H1 (cell line): ENCODE measurements at regions of chr10 and their contacts with region 1.

Region 1: DNA sequence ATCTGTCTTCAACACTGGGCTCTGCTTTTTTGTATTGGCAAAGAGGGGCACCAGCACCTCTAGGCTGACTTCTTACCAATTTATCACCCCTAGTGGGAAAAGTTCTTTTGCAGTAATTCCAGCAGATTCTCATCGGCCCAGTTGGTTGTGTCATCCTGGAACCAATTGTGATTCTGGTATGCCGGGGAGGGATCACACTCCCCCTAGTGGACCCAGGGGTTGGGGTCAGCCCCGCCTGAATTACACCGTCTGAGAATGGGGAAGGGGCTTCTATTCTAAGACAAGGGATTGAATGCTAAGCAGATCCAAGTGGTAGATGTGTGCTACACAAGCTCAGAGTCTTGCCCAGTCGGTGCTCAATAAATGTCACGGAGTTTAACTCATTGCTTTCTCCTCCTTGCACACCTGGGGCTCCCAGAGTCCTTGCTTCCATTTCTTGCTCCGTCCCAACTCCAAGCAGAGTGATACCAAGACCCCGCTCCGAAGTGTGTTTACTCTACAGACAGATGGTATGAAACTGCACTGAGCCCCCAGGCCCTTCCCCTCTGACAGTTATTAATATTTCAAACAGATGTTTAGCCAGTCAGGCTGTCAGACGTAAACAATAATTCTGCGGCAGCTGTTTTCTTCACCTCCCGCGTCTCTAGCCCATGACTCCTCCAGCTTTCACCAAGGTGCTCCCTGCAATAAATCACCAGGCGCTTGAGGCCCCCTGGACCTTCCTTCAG is 71.9 kb downstream of the C10orf105 start:
- DNase-seq: peak in 1 of 2 experiments; percentile 78
- H3K4me3 ChIP-seq: no peak overlapping the region
- H3K27ac ChIP-seq: no peak overlapping the region
- H3K4me1 ChIP-seq: peaks cover 10 to 14% (median 10%) of the 10 kb centered on the region in 4 experiments
- H3K27me3 ChIP-seq: no peaks in the 10 kb centered on the region
- CTCF ChIP-seq: peak; percentile 73 to 84 (median 83)
- EP300 ChIP-seq: no peak
- POLR2A ChIP-seq: no peak
- RAD21 ChIP-seq: peak; percentile 46 to 74

Region 2: DNA sequence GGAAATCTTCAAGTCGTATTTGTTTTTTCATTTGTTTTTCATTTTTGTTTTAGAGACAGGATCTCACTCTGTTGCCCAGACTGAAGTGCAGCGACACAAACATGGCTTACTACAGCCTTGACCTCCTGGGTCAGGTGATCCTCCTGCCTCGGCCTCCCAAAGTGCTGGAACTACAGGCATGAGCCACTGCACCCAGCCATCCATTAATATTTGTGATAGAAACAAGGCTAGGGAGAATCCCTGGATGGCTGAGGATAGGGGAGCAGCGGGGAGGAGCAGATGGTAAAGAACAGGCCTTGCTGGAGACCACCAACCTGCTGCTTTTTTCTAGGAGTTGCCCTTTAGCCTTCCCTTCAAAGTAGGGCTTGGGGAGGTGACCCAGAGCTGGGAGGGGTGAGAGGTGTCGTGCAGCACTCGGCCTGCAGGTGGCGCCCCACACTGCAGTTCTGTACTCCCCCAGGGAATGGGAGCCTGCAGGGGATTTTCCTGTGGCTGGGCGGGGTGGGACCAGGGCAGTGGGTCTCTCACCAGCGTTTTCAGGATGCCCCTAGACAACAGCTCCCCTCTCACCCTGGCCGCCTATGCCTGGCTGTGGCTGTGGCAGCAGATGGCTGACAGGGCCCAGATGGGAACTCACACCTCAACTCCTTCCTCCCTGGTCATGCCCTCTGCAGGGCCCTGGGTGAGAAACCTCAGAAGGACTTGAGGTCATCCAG is 263.6 kb before region 1 on chr10:
- CTCF ChIA-PET with region 1: interaction called, 10 read pairs
- POLR2A ChIA-PET with region 1: no interaction called
- DNase-seq: peak; percentile 58 to 99
- H3K4me3 ChIP-seq: no peak overlapping the region
- H3K27ac ChIP-seq: no peak overlapping the region
- H3K4me1 ChIP-seq: no peaks in the 10 kb centered on the region
- H3K27me3 ChIP-seq: no peaks in the 10 kb centered on the region
- CTCF ChIP-seq: peak; percentile 93 to 96 (median 95)
- EP300 ChIP-seq: no peak
- POLR2A ChIP-seq: no peak
- RAD21 ChIP-seq: peak; percentile 91 to 92

Region 3: DNA sequence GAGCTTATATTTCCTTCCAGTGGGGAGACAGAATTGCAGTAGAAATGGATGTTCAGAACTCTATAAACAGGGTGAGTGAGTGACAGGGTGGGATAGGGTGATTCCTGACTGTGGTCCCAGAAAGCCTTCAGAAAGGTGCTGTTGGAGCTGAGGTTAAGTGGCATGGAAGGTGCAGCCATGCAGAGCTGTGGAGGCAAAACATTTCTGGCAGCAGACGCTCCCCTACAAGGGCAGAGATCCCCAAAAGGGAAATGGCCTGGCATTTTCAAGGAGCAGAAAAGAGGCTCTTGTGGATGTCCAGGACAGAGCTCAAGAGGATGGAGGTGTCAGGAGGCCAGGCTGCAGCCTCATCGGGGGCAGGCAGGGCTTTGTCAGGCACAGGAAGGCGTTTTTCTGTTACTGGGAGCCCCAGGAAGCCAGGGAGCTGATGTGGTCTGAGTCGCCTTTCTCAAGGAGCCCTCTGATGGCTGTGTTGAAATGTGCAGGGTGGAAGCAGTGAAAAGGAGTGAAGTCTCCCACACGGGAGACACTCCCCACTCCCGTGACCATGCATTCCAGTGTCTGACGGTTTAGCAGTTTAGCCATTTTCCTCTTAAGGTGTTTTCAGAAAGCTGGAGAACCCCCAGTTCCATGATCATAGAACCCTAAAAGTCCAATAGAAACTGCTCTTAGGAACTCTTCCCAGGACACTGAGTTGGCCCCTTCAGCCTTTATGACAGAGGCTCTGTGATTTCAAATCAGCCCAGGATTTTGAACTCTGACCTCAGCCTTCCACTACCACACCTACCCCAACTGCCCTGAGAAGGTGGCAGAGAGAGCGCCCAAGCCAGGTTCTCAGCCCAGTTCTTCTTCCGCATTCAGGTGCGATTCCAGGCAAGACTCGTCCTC is 24.3 kb before region 1 on chr10:
- CTCF ChIA-PET with region 1: interaction called, 43 read pairs
- POLR2A ChIA-PET with region 1: interaction called, 3 read pairs
- DNase-seq: no peak
- H3K4me3 ChIP-seq: peak overlapping the region in 1 of 4 experiments; percentile 33; a peak in 1 of 8 replicates
- H3K27ac ChIP-seq: no peak overlapping the region
- H3K4me1 ChIP-seq: peaks cover 25 to 52% (median 35%) of the 10 kb centered on the region in 4 experiments
- H3K27me3 ChIP-seq: no peaks in the 10 kb centered on the region
- CTCF ChIP-seq: peak in 2 of 3 experiments; percentile 6 to 46; a peak in 2 of 4 replicates
- EP300 ChIP-seq: no peak
- POLR2A ChIP-seq: no peak
- RAD21 ChIP-seq: peak; percentile 28 to 43; a peak in 3 of 4 replicates

Region 4: DNA sequence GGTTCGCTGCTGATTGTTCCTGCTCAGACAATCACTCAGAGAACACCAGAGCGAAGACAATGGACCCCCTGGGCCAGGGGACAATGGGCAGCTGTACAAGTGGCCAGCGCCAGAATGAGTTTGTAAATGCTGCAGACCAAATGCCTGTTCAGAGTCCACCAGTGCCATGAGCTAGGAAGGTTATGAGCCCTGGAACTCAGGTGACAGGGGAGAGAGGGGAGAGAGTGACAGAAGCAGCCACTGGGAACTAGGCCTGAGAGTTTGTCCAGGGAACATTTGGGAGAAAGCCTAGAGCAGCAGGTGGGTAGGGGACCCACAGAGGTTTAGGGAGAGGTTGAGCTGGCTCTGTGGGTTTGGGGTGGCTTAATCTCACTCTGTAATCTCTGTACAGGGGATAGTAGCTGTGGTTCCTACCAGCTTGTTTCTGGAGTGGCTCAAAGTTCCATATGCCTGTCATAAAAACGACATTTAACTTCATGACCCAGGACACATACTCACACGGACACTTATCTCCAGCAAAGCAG is 11.5 kb after region 1 on chr10:
- CTCF ChIA-PET with region 1: interaction called, 44 read pairs
- POLR2A ChIA-PET with region 1: interaction called, 7 read pairs
- DNase-seq: peak in 1 of 2 experiments; percentile 19
- H3K4me3 ChIP-seq: no peak overlapping the region; a peak in 3 of 8 replicates
- H3K27ac ChIP-seq: no peak overlapping the region
- H3K4me1 ChIP-seq: peaks cover 22 to 36% (median 31%) of the 10 kb centered on the region in 4 experiments
- H3K27me3 ChIP-seq: peaks cover 0 to 19% (median 13%) of the 10 kb centered on the region in 4 experiments; a peak in 4 of 7 replicates
- CTCF ChIP-seq: no peak
- EP300 ChIP-seq: no peak
- POLR2A ChIP-seq: no peak
- RAD21 ChIP-seq: no peak